H1 (cell line): ENCODE measurements at regions of chr12 and their contacts with region 1.

Region 1: DNA sequence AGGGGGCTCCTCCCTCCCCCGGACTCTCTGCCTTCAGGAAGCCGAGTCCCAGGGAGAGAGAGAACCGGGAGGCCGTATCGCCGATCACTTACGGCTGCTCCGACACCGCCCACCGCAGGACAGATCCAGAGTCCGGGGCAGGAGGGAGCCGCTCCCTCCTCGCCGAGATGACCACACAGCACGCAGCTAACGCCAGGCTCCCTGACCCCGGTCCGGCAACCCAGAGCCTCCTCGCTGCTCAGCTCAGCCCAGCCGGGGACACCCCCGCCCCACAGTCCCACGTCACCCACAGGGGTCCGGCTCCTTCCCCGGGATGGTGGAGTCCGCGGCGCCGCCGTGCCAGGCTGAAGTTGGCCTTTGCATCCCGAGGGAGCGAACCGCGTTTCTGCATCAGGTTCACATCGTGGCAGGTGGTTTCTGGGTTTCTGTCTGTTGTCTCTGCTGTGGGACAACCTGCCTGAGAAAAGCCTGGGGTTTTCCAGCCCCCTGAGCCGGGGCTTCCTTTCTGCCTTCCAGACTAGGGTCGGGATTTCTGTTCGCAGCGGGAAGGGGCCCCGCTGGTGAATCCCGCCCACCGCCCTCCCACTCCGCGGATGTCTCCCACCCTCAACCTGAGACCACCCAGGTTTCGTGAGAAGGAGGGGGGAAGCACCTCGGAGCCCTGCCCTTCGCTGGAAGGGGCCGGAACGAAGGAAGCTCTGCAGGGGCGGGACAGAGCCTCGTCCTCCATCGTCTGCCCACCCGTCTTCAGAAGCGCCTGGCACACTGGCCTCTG is 61.2 kb downstream of the NOC4L start:
- DNase-seq: no peak
- H3K4me3 ChIP-seq: no peak overlapping the region
- H3K27ac ChIP-seq: no peak overlapping the region
- H3K4me1 ChIP-seq: peaks cover 0 to 3% (median 0%) of the 10 kb centered on the region in 4 experiments; a peak in 1 of 7 replicates
- H3K27me3 ChIP-seq: peaks cover 0 to 15% (median 14%) of the 10 kb centered on the region in 4 experiments; a peak in 4 of 7 replicates
- CTCF ChIP-seq: no peak
- EP300 ChIP-seq: no peak
- POLR2A ChIP-seq: no peak
- RAD21 ChIP-seq: no peak

Region 2: GRCh38 chr12:132194056-132194455 is 11.4 kb before region 1 on chr12:
- CTCF ChIA-PET with region 1: interaction called, 23 read pairs
- POLR2A ChIA-PET with region 1: interaction called, 3 read pairs
- DNase-seq: peak in 1 of 2 experiments; percentile 82
- H3K4me3 ChIP-seq: no peak overlapping the region
- H3K27ac ChIP-seq: no peak overlapping the region
- H3K4me1 ChIP-seq: peaks cover 0 to 10% (median 7%) of the 10 kb centered on the region in 4 experiments; a peak in 5 of 7 replicates
- H3K27me3 ChIP-seq: peaks cover 2 to 49% (median 24%) of the 10 kb centered on the region in 4 experiments
- CTCF ChIP-seq: peak in 2 of 3 experiments; percentile 93 to 96; a peak in 3 of 4 replicates
- EP300 ChIP-seq: no peak
- POLR2A ChIP-seq: no peak
- RAD21 ChIP-seq: peak; percentile 54 to 65; a peak in 3 of 4 replicates